ENCODE measurements at regions of chr19 and their contacts with region 1.

Region 1: GRCh38 chr19:18117692-18118378 is 20.3 kb downstream of the MAST3 start:
- DNase-seq: peak; percentile 94
- ATAC-seq: peak; percentile 86

Region 2: GRCh38 chr19:18160971-18161635 is 43.3 kb after region 1 on chr19:
- intact Hi-C with region 1: loop called (anchors 10 kb)
- DNase-seq: peak; percentile 83
- ATAC-seq: peak; percentile 57

Region 3: DNA sequence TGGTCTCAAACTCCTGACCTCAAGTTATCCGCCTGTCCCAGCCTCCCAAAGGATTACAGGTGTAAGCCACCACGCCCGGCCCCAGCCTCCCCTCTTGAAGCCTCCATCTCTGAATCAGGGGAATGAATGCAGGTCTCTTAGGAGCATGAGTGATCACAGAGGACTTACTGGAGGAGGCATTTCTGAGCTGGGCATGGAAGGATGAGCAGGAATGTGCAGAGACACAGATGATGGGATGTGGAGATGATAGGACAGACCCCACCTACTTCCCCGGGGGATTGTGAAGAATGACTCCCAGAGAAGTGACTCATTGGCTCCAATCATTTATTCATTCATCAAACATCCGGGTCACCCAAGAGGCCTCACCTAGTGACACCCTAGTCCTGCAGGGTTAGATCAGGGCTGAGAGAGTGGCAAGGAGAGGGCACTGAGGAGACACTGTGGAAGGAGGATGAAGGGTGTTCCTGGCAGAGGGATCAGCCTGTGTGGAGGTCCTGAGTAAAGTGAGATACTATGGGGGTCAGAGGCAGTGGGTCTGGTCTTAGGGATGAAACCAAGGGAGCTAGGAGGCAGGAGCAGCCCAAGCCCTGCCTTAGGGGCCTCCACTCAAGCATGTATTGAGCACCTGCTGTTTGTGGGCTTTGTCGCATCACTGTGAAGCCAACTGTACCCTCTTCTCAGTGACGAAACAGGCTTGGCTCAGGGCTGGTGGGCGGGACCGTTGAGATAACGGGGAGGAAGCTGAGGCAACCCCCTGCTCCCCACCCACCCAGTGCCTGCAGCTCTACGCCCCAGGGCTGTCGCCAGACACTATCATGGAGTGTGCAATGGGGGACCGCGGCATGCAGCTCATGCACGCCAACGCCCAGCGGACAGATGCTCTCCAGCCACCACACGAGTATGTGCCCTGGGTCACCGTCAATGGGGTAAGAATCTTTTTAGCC is 58.8 kb after region 1 on chr19:
- intact Hi-C with region 1: no loop called
- DNase-seq: no peak
- ATAC-seq: no peak

Region 4: DNA sequence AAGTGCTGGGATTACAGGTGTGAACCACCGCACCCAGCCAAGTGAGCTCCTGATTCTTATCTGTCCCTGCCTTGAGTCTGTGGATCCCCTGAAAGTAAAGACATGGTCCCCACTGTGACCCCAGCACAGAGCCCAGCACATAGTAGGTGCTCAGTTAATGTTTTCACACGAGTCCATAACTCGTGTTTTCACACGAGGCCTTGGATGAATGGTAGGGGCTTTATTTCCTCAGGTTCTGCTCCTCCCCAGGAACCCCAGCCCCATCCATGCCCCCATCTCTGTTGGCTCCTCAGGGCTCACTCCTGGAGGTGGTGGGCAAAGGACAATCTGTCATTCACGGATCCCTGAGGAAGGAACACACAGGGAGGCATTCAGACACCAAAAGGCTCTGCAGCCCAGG is 132.0 kb after region 1 on chr19:
- intact Hi-C with region 1: loop called (anchors 5 kb)
- DNase-seq: no peak
- ATAC-seq: no peak

Measured in sciatic nerve (tissue), 2 donors.